ENCODE measurements at regions of chr20 and their contacts with region 1.

Region 1: DNA sequence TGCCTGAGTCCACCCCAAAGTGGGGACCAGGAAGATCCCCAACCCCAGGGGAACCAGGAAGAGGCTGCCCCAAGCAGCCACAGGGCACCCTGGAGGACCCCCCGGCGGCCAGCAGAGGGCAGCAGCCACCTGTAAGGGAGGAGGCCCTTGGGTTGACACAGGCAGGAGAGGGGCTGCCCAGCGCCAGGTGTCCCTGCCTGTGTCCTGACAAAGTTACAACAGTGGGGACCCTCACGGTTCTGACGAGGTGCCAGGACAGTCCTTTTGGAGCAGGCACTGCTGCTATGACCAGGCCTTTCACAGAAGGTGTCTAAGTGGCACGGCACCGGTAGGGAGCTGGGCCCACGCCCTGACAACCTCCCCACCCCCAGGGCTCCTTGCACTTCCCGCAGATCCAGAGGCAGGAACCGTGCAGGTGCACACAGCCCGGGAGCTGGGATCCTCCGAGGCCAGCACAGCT is 176.7 kb downstream of the BMP7 start:
- DNase-seq: peak; percentile 80
- ATAC-seq: peak; percentile 82

Region 2: DNA sequence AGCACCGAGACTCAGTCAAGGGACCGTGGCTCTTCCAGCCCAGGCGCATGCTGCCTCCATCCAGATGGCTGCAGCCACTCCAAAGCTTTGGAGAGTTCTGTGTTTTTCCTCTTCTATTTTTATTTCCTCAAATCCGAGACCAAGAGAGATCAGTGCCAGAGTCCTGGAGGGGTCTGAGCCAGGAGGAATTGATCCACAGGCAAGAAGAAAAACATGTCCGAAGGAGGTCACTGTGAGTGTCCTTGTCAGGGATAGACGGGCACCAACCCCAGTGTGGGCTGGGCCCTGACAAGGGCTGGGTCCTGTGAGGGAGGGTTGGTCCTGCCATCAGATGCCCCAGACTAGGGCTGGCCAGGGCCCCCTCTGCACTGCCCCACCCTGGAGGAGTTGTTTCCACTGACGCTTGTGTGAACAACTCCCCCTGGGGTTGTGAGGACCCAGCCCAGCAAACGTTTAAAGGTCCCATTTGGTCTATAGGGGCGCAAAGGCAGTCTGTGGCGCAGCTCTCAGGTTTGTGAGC is 72.5 kb after region 1 on chr20:
- intact Hi-C with region 1: loop called (anchors 5 kb)
- DNase-seq: no peak
- ATAC-seq: peak; percentile 83

Region 3: GRCh38 chr20:57263801-57264792 is 174.4 kb after region 1 on chr20:
- intact Hi-C with region 1: loop called (anchors 5 kb)
- DNase-seq: no peak
- ATAC-seq: peak; percentile 20

Region 4: DNA sequence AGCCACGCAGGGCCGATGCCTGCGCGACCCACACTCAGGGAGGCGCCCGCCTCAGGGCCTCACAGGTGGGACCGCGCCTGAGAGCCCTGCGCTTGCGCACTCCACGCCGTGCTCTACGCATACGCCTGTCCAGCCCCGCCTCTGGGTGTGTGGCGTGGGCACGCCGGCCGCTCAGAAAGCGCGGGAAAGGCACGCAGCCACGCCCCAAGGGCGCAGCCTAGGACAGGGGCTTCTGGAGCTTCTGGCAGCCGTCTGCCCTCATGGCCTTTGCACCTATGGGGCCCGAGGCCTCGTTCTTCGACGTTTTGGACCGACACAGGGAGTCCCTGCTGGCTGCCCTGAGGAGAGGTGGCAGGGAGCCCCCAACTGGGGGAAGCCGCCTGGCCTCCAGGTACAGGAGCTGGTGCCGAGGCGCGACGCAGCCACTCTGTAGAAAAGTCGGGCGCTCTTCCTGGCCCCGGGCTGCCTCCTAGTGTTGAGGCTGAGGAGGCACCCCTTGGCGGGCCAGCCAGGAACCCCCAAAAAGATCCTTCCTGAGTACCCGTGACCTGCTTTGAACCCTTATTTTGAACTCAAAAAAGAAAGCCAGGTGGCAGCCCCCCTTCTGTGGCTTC is 240.0 kb after region 1 on chr20 and contains the start of gene SPO11:
- intact Hi-C with region 1: loop called (anchors 5 kb)
- DNase-seq: no peak
- ATAC-seq: peak; percentile 57
- total RNA-seq, gene SPO11: not detected

Region 5: GRCh38 chr20:57346477-57346876 is 256.8 kb after region 1 on chr20:
- intact Hi-C with region 1: loop called (anchors 1 kb)
- DNase-seq: peak; percentile 83
- ATAC-seq: no peak

Region 6: GRCh38 chr20:57440678-57441520 is 351.2 kb after region 1 on chr20:
- intact Hi-C with region 1: no loop called
- DNase-seq: peak; percentile 94
- ATAC-seq: peak; percentile 89